ENCODE measurements at regions of chr13 and their contacts with region 1.

Region 1: DNA sequence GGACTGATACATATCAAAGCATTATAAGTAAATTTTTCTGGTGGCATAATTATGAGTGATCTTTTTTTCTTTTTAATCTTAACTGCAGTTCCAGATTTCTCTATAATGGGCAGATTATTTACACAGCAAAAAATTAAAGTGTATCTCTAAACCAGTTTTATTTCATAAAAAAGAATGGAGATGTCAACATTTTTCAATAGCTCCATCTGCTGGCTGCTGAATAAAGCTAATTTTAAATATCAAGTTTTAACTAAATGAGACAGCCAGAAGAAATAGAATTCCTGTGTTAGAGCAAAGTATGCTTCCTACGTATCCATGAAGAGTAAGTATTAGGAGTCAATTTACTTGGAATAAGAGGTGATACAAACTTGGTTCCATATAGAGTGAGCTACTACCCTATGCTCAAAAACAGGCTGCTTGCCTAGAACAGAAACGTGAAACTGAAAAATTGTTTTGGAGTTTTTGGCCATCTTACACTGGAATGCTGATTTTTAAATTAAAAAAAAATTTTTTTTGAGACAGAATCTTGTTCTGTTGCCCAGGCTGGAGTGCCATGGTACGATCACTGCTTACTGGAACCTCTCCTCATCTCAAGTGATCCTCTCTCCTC is 5.0 kb upstream of the PDS5B start:
- DNase-seq: no peak
- ATAC-seq: no peak

Region 2: DNA sequence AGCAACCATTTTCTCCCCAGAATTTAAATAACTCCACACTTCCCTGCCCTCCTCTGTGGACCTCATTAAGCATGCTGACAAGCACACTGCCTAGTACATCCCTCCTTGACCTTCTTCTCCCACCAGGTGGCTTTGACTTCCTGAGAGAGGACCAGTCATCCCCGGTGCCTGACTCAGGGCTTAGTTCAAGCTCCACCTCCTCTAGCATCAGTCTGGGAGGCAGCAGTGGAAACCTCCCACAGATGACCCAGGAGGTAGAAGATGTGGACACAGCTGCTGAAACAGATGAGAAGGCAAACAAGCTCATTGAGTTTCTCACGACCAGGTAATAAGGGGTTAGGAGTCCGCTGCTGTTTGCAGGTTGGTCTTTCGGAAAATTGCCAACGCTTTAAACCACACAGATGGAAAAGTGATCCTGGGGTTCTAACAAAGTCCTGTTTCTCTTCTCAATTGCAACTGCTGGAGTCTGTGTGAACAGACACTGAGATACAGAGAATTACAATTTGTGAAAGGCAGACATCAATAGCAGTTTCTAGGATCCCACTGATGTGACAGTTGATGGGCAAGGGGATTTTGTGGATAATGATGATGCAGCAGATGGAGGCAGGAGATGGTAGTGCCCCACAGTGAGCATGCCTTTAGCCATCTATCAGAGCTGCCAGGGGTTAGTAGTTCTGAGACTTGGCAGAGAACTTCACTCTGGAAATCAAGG is 352.8 kb before region 1 on chr13:
- intact Hi-C with region 1: no loop called
- DNase-seq: no peak
- ATAC-seq: no peak

Region 3: GRCh38 chr13:32381539-32381938 is 199.7 kb before region 1 on chr13:
- intact Hi-C with region 1: loop called (anchors 5 kb)
- DNase-seq: no peak
- ATAC-seq: peak; percentile 63